ENCODE measurements at regions of chr10 and their contacts with region 1.

Region 1: DNA sequence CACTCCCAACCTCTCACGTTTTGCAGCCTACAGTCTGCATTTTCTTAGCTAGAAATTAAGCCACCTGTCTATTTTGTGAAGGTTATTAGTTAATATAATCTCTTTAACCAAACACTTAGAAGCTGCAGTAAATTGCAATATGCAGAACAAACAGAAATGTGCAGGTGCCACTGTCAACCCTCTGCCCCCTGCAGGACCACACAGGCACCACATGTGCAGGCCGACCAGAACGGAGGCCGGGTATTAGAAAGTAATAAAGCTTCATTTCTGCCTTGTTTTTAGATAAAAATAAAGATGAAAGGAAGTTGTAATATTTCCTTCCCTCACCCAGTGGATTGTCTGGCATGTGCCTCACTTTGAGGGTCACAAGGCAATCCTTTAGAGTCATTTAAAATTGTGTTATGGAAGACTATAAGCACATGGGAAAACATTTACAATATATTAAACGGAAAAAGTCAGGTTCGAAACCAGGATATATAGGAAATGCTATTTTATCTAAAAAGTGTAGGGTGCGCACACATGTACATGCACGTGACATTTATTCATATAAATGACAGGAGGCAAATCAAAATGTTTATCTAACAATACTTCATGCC is 158.2 kb downstream of the ARHGAP12 start:
- DNase-seq: peak; percentile 64
- ATAC-seq: peak; percentile 73
- H3K4me3 Mint-ChIP-seq: no peak overlapping the region
- H3K27ac Mint-ChIP-seq: no peak overlapping the region
- H3K4me1 Mint-ChIP-seq: no peaks in the 10 kb centered on the region
- H3K27me3 Mint-ChIP-seq: no peaks in the 10 kb centered on the region

Region 2: GRCh38 chr10:31581741-31582313 is 188.6 kb before region 1 on chr10:
- CTCF ChIA-PET with region 1: no interaction called
- DNase-seq: no peak
- ATAC-seq: no peak
- H3K4me3 Mint-ChIP-seq: no peak overlapping the region
- H3K27ac Mint-ChIP-seq: no peak overlapping the region
- H3K4me1 Mint-ChIP-seq: peaks cover 8% of the 10 kb centered on the region
- H3K27me3 Mint-ChIP-seq: peaks cover 7% of the 10 kb centered on the region

Region 3: GRCh38 chr10:31677195-31678138 is 92.9 kb before region 1 on chr10:
- CTCF ChIA-PET with region 1: no interaction called
- DNase-seq: no peak
- ATAC-seq: no peak
- H3K4me3 Mint-ChIP-seq: no peak overlapping the region
- H3K27ac Mint-ChIP-seq: no peak overlapping the region
- H3K4me1 Mint-ChIP-seq: no peaks in the 10 kb centered on the region
- H3K27me3 Mint-ChIP-seq: peaks cover 4% of the 10 kb centered on the region

Region 4: DNA sequence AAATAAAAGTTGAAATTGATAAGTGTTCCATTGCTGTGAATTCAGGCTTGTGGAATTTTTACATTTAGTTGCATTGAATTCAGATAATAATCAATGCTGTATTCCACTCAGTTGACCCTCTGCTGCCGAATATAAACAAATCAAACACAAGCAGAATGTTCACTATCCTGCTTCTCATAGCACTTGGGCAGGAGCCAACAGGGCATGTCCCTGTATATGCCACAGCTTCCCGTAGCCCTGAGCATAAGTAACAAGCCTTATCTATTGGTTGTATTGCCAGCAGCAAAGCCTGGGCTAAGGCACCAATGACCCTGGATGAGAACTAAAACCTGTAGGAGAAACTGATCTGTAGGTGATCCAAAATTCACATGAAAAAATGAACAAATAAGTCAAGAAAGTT is 12.3 kb after region 1 on chr10:
- CTCF ChIA-PET with region 1: interaction called, 10 read pairs
- DNase-seq: no peak
- ATAC-seq: no peak
- H3K4me3 Mint-ChIP-seq: no peak overlapping the region
- H3K27ac Mint-ChIP-seq: no peak overlapping the region
- H3K4me1 Mint-ChIP-seq: no peaks in the 10 kb centered on the region
- H3K27me3 Mint-ChIP-seq: peaks cover 17% of the 10 kb centered on the region

Region 5: GRCh38 chr10:31864834-31865518 is 94.6 kb after region 1 on chr10:
- CTCF ChIA-PET with region 1: no interaction called
- DNase-seq: no peak
- ATAC-seq: no peak
- H3K4me3 Mint-ChIP-seq: no peak overlapping the region
- H3K27ac Mint-ChIP-seq: no peak overlapping the region
- H3K4me1 Mint-ChIP-seq: peaks cover 10% of the 10 kb centered on the region
- H3K27me3 Mint-ChIP-seq: no peaks in the 10 kb centered on the region

Region 6: GRCh38 chr10:31977440-31978155 is 207.2 kb after region 1 on chr10:
- CTCF ChIA-PET with region 1: no interaction called
- DNase-seq: no peak
- ATAC-seq: peak; percentile 63
- H3K4me3 Mint-ChIP-seq: peak overlapping the region; percentile 5
- H3K27ac Mint-ChIP-seq: peak overlapping the region; percentile 2
- H3K4me1 Mint-ChIP-seq: peaks cover 22% of the 10 kb centered on the region
- H3K27me3 Mint-ChIP-seq: no peaks in the 10 kb centered on the region

Measured in activated CD8-positive, alpha-beta memory T cell treated with anti-CD3 and anti-CD28 coated beads, Interleukin-2, amount 10 ng/mL, durations not matched to agents 7 days and 5 days (primary cell).